Caco-2 (cell line): ENCODE measurements at regions of chr6 and their contacts with region 1.

Region 1: GRCh38 chr6:36599791-36600209 is 5.6 kb downstream of the SRSF3 start:
- DNase-seq: no peak
- H3K4me3 ChIP-seq: no peak overlapping the region
- H3K4me3 Mint-ChIP-seq: peak overlapping the region; percentile 46
- H3K27ac Mint-ChIP-seq: peak overlapping the region; percentile 17
- H3K4me1 ChIP-seq: peaks cover 27% of the 10 kb centered on the region
- H3K4me1 Mint-ChIP-seq: peaks cover 13% of the 10 kb centered on the region
- H3K27me3 ChIP-seq: no peaks in the 10 kb centered on the region
- H3K27me3 Mint-ChIP-seq: no peaks in the 10 kb centered on the region
- CTCF ChIP-seq: no peak

Region 2: GRCh38 chr6:36423101-36423824 is 176.5 kb before region 1 on chr6:
- CTCF ChIA-PET with region 1: no interaction called
- POLR2A ChIA-PET with region 1: no interaction called
- intact Hi-C with region 1: loop called (anchors 10 kb)
- DNase-seq: peak; percentile 99
- H3K4me3 ChIP-seq: peak overlapping the region; percentile 58
- H3K4me3 Mint-ChIP-seq: peak overlapping the region; percentile 81
- H3K27ac Mint-ChIP-seq: peak overlapping the region; percentile 82
- H3K4me1 ChIP-seq: peaks cover 22% of the 10 kb centered on the region
- H3K4me1 Mint-ChIP-seq: peaks cover 15% of the 10 kb centered on the region
- H3K27me3 ChIP-seq: no peaks in the 10 kb centered on the region
- H3K27me3 Mint-ChIP-seq: no peaks in the 10 kb centered on the region
- CTCF ChIP-seq: peak; percentile 56 to 76

Region 3: DNA sequence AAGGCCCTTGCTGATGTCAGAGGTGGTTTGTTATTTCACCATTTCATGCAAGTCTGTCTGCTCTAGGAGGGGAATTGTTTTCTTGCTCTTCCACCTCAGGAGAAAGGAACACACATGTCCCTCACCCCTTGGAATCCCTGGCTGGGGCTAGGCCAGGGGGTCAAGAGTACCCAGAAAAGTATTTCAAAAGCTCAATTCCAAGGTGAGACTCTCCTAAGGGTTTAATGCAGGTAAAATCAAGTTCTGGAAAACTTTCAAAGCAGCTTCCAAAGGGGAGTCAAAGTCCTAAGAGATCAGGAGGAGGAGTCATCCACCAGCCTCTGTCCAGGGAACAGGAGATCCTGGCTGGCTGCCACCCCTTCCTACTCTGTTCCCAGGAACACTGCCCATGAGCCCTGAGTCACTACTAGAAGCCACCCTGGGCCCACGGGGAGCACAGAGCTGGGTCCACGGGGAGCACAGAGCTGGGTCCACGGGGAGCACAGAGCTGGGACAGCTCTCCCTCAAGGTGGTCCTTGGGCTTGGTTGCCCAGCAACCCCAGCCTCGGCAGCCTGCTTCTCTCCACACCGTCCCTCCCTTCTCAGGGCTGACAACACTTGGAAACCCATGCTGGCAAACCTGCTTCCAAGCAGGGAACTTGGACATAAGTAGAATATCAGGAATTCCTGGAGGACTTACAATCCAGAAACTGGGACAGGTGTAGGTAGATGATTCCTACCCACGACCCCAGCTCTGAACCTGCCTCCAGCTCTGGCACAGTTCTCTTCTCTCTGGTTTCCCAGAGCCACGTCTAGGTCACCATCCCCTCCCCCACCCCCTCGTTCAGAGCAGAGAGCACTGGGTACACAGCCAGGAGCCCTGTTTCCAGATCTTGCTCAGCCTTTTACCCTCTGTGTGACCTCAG is 43.4 kb after region 1 on chr6:
- CTCF ChIA-PET with region 1: no interaction called
- POLR2A ChIA-PET with region 1: no interaction called
- intact Hi-C with region 1: no loop called
- DNase-seq: no peak
- H3K4me3 ChIP-seq: no peak overlapping the region
- H3K4me3 Mint-ChIP-seq: no peak overlapping the region
- H3K27ac Mint-ChIP-seq: no peak overlapping the region
- H3K4me1 ChIP-seq: no peaks in the 10 kb centered on the region
- H3K4me1 Mint-ChIP-seq: no peaks in the 10 kb centered on the region
- H3K27me3 ChIP-seq: no peaks in the 10 kb centered on the region
- H3K27me3 Mint-ChIP-seq: no peaks in the 10 kb centered on the region
- CTCF ChIP-seq: no peak